Activated naive CD4-positive, alpha-beta T cell treated with anti-CD3 and anti-CD28 coated beads for 36 hours (primary cell): ENCODE measurements at regions of chr9 and their contacts with region 1.

Region 1: DNA sequence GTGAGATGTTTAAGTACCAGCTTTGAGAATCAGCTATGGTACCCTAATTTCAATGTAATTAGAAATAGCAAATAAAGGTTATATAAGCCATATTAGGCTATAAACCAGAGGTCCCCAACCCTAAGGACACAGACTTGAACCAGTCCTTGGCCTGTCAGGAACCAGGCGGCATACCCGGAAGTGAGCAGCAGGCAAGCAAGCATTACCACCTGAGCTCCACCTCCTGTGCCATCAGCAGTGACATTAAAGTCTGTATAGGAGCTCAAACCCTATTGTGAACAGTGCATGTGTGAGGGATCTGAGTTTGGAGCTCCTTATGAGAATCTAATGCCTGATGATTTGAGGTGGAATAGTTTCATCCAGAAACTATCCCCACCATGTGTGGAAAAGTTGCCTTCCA is 1009.5 kb downstream of the PTPRD start:
- DNase-seq: no peak
- H3K4me3 Mint-ChIP-seq: no peak overlapping the region
- H3K27ac Mint-ChIP-seq: no peak overlapping the region
- H3K4me1 Mint-ChIP-seq: no peaks in the 10 kb centered on the region
- H3K27me3 Mint-ChIP-seq: no peaks in the 10 kb centered on the region

Region 2: GRCh38 chr9:9790216-9790872 is 187.0 kb after region 1 on chr9:
- CTCF ChIA-PET with region 1: interaction called, 10 read pairs
- intact Hi-C with region 1: loop called (anchors 1 kb)
- DNase-seq: peak; percentile 39
- H3K4me3 Mint-ChIP-seq: no peak overlapping the region
- H3K27ac Mint-ChIP-seq: no peak overlapping the region
- H3K4me1 Mint-ChIP-seq: no peaks in the 10 kb centered on the region
- H3K27me3 Mint-ChIP-seq: no peaks in the 10 kb centered on the region

Region 3: DNA sequence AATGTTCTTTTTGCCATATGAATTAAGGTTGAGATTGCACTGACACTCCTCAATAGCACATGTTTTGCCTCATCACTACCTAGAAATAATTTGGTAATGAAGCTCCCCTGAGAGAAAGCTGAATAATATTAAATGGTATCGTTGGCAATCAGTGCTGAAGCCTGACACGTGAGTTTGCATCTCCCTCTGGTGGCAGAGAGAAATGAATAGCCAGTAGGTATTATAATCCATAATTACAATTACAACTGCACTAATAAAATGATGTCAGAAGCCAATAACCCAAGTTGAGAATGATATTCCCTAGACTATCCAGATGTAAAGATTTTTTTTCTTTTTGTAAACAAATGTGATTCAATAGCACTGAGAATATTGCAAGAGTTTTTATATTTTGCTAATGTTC is 309.1 kb after region 1 on chr9:
- CTCF ChIA-PET with region 1: no interaction called
- intact Hi-C with region 1: loop called (anchors 10 kb)
- DNase-seq: no peak
- H3K4me3 Mint-ChIP-seq: no peak overlapping the region
- H3K27ac Mint-ChIP-seq: no peak overlapping the region
- H3K4me1 Mint-ChIP-seq: no peaks in the 10 kb centered on the region
- H3K27me3 Mint-ChIP-seq: no peaks in the 10 kb centered on the region

Region 4: DNA sequence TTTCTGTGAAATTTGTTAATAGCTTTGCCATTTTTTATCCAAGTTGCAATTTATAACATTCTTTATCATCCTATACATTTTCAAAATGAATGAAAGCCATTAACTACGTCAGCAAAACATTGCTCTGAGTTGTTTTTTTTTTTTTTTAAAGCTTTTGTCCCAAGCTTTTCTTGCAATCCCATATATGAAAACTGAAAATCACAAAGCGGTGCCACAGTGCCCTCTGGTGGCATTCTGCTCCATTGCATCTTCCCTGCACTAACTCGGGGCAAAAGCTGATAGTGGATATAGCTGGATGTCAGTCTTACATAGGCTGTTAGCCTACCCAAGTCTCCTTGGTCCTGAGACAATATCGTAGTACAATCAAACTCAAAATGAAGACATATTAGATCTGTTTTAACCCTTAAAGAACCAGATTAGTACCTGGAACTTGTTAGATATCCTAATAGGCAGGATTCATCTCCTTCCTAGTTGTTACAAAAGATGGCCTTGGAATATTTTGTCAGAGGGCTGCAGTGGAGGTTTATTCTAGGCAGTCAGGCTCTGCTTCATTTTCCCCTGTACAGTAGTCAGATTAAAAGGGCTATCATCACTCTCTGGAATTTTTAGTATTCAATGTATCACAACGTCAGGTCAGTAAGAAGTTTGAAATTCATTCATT is 339.5 kb after region 1 on chr9:
- CTCF ChIA-PET with region 1: interaction called, 7 read pairs
- intact Hi-C with region 1: loop called (anchors 1 kb)
- DNase-seq: peak; percentile 66
- H3K4me3 Mint-ChIP-seq: no peak overlapping the region
- H3K27ac Mint-ChIP-seq: no peak overlapping the region
- H3K4me1 Mint-ChIP-seq: no peaks in the 10 kb centered on the region
- H3K27me3 Mint-ChIP-seq: no peaks in the 10 kb centered on the region